ENCODE measurements at regions of chr12 and their contacts with region 1.

Region 1: DNA sequence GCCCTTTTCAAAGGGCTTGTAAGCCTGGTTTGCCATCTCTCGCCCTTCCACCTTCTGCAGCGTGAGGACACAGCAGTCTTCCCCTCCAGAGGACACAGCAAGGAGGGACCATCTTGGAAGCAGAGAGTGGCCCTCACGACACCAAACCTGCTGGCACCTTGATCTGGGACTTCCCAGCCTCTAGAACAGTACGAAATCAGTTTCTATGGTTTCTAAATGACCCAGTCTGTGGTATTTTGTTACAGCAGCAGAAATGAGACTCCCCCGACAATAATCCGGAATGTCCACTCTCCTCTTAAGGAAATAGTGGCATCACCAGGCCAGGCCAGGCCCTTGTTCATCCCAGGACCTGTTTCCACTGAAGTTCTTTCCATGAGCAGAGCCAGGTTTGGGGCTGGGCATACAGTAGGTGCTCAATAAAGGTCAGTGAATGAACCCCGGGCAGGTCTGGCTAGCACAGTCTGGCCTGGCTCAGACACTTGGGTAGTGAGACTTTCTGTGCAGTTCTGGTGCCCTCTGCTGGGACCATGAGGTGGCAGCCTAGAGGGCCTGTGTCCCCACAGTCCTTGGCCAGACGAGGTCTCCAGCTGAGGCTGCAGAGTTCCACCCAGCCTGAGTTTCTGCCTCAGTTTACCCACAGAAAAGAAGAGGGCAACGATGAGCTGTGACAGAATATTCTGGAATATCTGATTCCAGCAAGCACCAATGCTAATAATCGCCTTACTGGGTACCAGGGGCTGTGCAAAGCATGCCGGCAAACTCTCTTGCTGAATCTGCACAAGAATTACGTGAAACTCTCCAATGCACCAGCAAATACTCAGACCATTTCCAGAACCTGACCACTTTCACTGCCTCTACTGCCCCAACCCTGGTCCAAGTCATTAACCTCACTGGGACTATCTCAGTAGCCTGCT is 14.0 kb downstream of the ABCB9 start:
- DNase-seq: peak; percentile 81
- H3K4me3 Mint-ChIP-seq: no peak overlapping the region
- H3K27ac Mint-ChIP-seq: no peak overlapping the region
- H3K4me1 Mint-ChIP-seq: peaks cover 8% of the 10 kb centered on the region
- H3K27me3 Mint-ChIP-seq: no peaks in the 10 kb centered on the region
- CTCF ChIP-seq: peak; percentile 87

Region 2: DNA sequence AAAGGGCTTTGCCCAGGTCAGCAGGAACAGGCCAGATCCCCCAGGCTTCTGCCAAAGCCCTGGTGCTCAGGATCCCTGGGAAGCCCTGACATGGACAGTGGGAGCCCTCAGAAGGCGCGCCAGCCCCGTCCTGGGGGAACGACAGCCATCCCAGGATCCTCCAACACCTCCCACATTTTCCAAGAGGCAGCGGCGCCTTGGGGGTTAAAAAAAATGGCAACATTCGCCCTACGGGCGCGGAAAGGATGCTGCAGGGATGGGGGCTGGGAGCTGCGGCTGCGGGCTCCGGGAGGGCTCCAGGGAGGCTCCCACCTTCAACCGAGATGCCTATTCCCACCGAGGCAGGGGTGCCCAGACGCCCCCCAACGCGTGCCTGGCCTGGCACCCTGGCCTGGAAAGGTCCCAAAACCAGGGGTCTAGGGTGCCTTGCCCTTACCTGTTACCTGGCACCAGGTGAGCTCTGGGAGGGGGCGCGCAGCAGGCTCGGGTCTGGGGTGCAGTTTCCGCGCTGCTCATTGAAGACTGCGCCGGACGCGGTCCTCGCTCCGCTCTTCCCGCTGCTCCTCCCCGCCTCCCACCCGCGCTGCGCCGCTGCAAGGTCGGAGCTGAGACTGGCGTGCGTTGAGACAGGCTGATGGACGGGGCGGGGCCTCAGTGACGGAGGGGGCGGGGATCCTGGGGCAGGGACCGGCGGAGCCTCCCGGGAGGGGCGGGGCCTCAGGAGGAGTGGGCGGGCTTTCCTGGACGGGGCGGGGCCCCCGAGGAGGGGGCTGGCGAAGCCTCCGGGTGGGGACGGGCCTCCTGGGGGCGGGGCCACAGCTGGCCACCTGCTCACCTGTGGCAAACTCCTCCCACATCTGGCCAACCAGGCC is 13.9 kb after region 1 on chr12 and contains the start of gene ABCB9:
- CTCF ChIA-PET with region 1: interaction called, 15 read pairs
- POLR2A ChIA-PET with region 1: interaction called, 8 read pairs
- intact Hi-C with region 1: no loop called
- DNase-seq: peak; percentile 92
- H3K4me3 Mint-ChIP-seq: peak within 1 kb of the TSS; percentile 72
- H3K27ac Mint-ChIP-seq: no peak within 1 kb of the TSS
- H3K4me1 Mint-ChIP-seq: no peaks in the 10 kb centered on the region
- H3K27me3 Mint-ChIP-seq: no peaks in the 10 kb centered on the region
- CTCF ChIP-seq: no peak
- total RNA-seq, gene ABCB9: 1.6 and 3.2 TPM in 2 replicates

Region 3: GRCh38 chr12:122999196-122999950 is 47.1 kb after region 1 on chr12:
- CTCF ChIA-PET with region 1: no interaction called
- POLR2A ChIA-PET with region 1: no interaction called
- intact Hi-C with region 1: no loop called
- DNase-seq: no peak
- H3K4me3 Mint-ChIP-seq: no peak overlapping the region
- H3K27ac Mint-ChIP-seq: no peak overlapping the region
- H3K4me1 Mint-ChIP-seq: no peaks in the 10 kb centered on the region
- H3K27me3 Mint-ChIP-seq: no peaks in the 10 kb centered on the region
- CTCF ChIP-seq: no peak